ENCODE measurements at regions of chr6 and their contacts with region 1.

Region 1: DNA sequence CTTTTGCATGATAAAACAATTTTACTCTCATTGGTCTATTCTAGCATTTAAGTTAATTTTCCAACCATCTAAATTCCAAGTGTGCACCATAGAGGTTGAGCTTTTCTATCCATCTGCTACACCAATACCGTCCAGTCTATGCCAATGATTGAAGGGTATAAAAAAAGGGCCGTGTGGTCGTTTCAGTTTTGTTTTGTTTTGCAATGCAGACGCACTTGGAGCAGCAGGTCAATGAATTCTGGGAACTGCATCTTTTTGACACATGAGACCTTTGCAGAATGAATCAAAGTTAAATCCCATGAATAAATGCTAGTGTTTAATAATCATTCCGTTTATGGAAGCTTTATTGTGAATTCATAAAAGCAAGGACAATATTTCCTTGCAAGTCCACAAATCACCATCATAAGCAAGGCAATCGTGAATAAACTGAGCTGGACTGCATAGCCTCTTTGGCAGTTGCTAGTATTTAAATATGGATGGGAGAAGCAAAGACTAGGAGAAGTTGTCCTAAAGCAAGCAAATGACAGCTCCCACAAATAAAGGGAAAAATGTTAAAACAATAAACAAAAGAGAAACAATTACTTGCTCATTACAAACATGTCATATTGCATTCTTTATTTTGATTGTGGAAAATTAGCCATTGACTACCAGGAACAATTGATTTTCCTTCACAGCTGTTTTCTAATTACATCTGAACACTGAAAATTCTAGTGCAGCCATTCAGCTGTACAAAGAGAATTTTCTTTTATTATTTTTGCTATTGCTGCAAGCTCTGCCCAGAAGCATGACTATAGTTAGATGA is 649.7 kb upstream of the GJE1 start:
- DNase-seq: no peak
- H3K4me3 ChIP-seq: no peak overlapping the region
- H3K27ac ChIP-seq: no peak overlapping the region
- H3K4me1 ChIP-seq: no peaks in the 10 kb centered on the region
- H3K27me3 ChIP-seq: no peaks in the 10 kb centered on the region
- CTCF ChIP-seq: no peak

Region 2: DNA sequence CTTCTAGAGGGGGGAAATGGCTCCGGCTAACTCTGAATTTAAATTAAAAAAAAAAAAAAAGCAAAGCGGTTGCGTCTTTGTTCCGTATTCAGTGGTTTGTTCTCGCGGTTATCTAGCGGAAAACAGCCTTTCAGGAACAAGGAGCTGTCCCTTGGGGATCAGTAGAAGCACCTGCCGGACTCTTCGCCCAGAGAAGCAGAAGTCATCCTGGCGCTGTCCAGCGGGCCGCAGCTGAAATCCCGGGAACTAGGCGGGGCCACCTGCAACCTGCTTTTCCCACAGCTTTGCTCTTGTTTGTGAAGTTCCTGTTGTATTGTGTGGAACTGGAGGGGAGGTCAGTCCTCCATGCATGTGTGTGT is 605.8 kb after region 1 on chr6:
- CTCF ChIA-PET with region 1: interaction called, 24 read pairs
- POLR2A ChIA-PET with region 1: no interaction called
- intact Hi-C with region 1: no loop called
- DNase-seq: peak in 1 of 2 experiments; percentile 12
- H3K4me3 ChIP-seq: no peak overlapping the region
- H3K27ac ChIP-seq: no peak overlapping the region
- H3K4me1 ChIP-seq: no peaks in the 10 kb centered on the region
- H3K27me3 ChIP-seq: no peaks in the 10 kb centered on the region
- CTCF ChIP-seq: no peak

Measured in PC-9 (cell line).